Endothelial cell of umbilical vein (primary cell): ENCODE measurements at regions of chr1 and their contacts with region 1.

Region 1: DNA sequence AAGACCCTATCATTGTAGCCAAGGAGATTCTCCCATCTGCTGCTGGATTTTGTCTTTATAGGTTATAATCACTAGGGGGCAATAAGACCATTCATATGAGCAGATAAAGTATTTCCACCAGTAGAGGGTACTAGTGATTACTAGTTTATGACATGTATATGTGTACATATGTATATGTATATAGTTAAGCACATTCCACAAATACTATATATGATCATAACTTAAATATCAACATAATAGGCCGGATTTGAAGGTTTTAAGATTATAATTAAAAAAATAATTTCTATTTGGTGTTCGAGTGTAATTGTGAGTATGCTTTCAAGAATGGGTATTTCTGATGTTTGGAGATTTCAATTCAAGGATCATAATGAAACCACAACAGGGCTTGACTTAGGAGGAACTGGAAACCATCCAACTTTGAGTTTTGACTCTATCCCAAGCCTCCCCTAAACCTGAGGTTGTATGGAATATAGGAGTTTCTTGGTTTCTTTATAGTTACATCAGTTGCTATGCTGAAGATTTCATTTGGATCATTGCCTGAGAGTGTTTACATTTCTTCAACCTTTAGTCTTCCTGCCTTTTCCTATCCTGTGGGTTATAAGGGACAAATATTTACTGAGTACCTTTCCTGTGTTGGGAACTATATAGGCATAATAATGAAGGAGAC is 16.9 kb downstream of the TCEANC2 start:
- DNase-seq: peak; percentile 69
- H3K4me3 ChIP-seq: no peak overlapping the region
- H3K27ac ChIP-seq: no peak overlapping the region
- H3K4me1 ChIP-seq: no peaks in the 10 kb centered on the region
- H3K27me3 ChIP-seq: no peaks in the 10 kb centered on the region
- CTCF ChIP-seq: peak; percentile 44 to 54
- POLR2A ChIP-seq: no peak

Region 2: DNA sequence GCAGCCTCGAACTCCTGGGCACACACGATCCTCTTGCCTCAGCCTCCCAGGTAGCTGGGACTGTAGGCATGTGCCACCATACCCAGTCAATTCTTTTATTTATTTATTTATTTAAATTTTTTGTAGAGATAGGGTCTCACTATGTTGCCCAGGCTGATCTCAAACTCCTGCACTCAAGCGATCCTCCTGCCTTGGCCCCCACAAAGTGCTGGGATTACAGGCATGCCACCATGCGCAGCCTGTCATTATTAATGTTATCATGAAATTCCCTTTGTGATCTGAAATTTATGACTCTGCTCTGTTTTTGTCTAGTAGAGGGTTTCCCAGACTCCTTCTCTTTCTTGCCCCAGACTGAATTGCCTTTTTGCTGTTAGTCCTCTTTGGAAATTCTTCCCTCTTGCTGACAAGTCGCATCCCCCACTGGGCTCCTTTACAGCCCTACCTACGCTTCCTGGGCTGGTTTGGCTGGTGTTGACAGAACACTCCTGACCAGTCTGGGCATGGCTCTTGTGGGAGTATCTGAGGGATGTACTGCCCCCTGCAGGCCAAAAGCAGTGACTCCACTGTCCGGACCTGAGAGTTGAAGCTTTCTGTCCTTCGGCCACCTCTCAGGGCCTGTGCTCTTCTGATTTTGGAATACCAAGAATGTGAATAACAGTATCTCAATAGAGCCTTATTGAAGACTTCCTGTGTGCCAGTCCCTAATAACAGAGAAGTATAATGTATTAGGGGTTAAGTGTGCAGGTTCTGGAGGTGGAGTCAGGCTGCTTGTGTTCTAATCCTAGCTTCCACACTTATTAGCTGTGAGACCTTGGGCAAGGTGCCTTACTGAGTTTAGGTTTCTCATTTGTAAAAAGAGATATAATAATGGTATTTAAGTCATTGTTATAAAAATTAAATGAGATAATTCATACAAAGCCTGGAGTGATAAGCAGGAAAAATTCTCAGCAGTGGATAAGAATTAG is 11.3 kb after region 1 on chr1:
- CTCF ChIA-PET with region 1: interaction called, 38 read pairs
- POLR2A ChIA-PET with region 1: no interaction called
- dilution Hi-C with region 1: no loop called
- intact Hi-C with region 1: loop called (anchors 1 kb)
- DNase-seq: peak; percentile 59
- H3K4me3 ChIP-seq: no peak overlapping the region
- H3K27ac ChIP-seq: no peak overlapping the region
- H3K4me1 ChIP-seq: no peaks in the 10 kb centered on the region
- H3K27me3 ChIP-seq: no peaks in the 10 kb centered on the region
- CTCF ChIP-seq: peak; percentile 85 to 92
- POLR2A ChIP-seq: no peak

Region 3: GRCh38 chr1:54259546-54260140 is 189.3 kb after region 1 on chr1:
- CTCF ChIA-PET with region 1: no interaction called
- POLR2A ChIA-PET with region 1: no interaction called
- dilution Hi-C with region 1: no loop called
- intact Hi-C with region 1: no loop called
- DNase-seq: no peak
- H3K4me3 ChIP-seq: no peak overlapping the region
- H3K27ac ChIP-seq: no peak overlapping the region
- H3K4me1 ChIP-seq: peaks cover 7% of the 10 kb centered on the region
- H3K27me3 ChIP-seq: no peaks in the 10 kb centered on the region
- CTCF ChIP-seq: no peak
- POLR2A ChIP-seq: no peak

Region 4: GRCh38 chr1:54273092-54273794 is 202.9 kb after region 1 on chr1:
- CTCF ChIA-PET with region 1: no interaction called
- POLR2A ChIA-PET with region 1: no interaction called
- dilution Hi-C with region 1: no loop called
- intact Hi-C with region 1: loop called (anchors 1 kb)
- DNase-seq: peak; percentile 82
- H3K4me3 ChIP-seq: no peak overlapping the region
- H3K27ac ChIP-seq: peak overlapping the region; percentile 30
- H3K4me1 ChIP-seq: peaks cover 19% of the 10 kb centered on the region
- H3K27me3 ChIP-seq: no peaks in the 10 kb centered on the region
- CTCF ChIP-seq: peak; percentile 7 to 62
- POLR2A ChIP-seq: no peak

Region 5: DNA sequence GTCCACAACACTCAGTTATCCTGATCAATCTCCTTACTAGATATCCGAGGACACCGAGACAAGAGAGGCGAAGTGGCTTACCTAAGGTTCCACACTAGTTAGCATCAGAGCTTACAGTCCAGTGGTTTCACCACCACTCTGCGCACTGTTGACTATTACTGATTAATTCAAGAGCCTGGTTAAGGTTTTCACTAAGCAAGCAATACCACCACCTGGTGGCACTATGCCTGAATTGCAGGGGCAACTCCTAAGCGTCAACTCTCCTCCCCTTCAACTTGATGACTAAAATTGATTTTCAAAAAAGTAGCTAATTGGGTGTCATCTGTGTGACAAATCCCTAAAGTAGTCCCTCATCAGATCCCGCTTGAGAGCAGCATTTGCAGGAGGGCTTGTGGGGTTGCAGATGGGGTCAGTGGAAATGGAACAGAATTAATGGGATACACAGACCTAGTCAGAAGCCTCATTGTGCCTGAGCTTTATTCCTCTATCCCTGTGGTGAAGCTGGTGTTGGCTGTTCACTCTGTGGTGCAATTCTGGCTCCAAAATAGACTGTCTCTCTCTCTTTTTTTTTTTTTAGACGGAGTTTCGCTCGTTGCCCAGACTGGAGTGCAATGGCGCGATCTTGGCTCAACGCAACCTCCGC is 721.7 kb after region 1 on chr1:
- CTCF ChIA-PET with region 1: interaction called, 3 read pairs
- POLR2A ChIA-PET with region 1: no interaction called
- dilution Hi-C with region 1: no loop called
- intact Hi-C with region 1: loop called (anchors 1 kb)
- DNase-seq: peak; percentile 20
- H3K4me3 ChIP-seq: no peak overlapping the region
- H3K27ac ChIP-seq: no peak overlapping the region
- H3K4me1 ChIP-seq: no peaks in the 10 kb centered on the region
- H3K27me3 ChIP-seq: peaks cover 2% of the 10 kb centered on the region in 2 experiments
- CTCF ChIP-seq: peak; percentile 55 to 73
- POLR2A ChIP-seq: no peak

Region 6: GRCh38 chr1:54810100-54810942 is 740.0 kb after region 1 on chr1:
- CTCF ChIA-PET with region 1: interaction called, 4 read pairs
- POLR2A ChIA-PET with region 1: no interaction called
- dilution Hi-C with region 1: no loop called
- intact Hi-C with region 1: loop called (anchors 5 kb)
- DNase-seq: peak; percentile 54
- H3K4me3 ChIP-seq: no peak overlapping the region
- H3K27ac ChIP-seq: no peak overlapping the region
- H3K4me1 ChIP-seq: no peaks in the 10 kb centered on the region
- H3K27me3 ChIP-seq: no peaks in the 10 kb centered on the region
- CTCF ChIP-seq: peak; percentile 76 to 89
- POLR2A ChIP-seq: no peak